ENCODE measurements at regions of chr1 and their contacts with region 1.

Region 1: GRCh38 chr1:53182111-53182593 is 14.5 kb upstream of the CPT2 start:
- DNase-seq: peak; percentile 90
- H3K4me3 ChIP-seq: no peak overlapping the region
- H3K27ac ChIP-seq: peak overlapping the region in 2 of 4 donors; percentile 15 to 24
- H3K4me1 ChIP-seq: peaks cover 0 to 5% (median 3%) of the 10 kb centered on the region in 4 donors
- H3K27me3 ChIP-seq: no peaks in the 10 kb centered on the region
- CTCF ChIP-seq: peak; percentile 78 to 89 (median 86)
- EP300 ChIP-seq: no peak
- POLR2A ChIP-seq: no peak

Region 2: GRCh38 chr1:52842643-52843309 is 339.4 kb before region 1 on chr1 and contains the start of gene ZYG11A:
- intact Hi-C with region 1: loop called (anchors 10 kb)
- DNase-seq: no peak
- H3K4me3 ChIP-seq: peak within 1 kb of the TSS; percentile 14 to 47 (median 38)
- H3K27ac ChIP-seq: no peak within 1 kb of the TSS
- H3K4me1 ChIP-seq: peaks cover 0 to 16% (median 12%) of the 10 kb centered on the region in 4 donors
- H3K27me3 ChIP-seq: peaks cover 13 to 58% (median 24%) of the 10 kb centered on the region in 3 donors
- CTCF ChIP-seq: peak in 1 of 4 experiments; percentile 19
- EP300 ChIP-seq: no peak
- POLR2A ChIP-seq: no peak
- total RNA-seq, gene ZYG11A: not detected

Measured in sigmoid colon (tissue), 7 donors.